ENCODE measurements at regions of chr2 and their contacts with region 1.

Region 1: GRCh38 chr2:210445116-210445707 is 31.3 kb downstream of the LANCL1 start:
- DNase-seq: peak; percentile 39
- ATAC-seq: no peak
- H3K4me3 ChIP-seq: no peak overlapping the region
- H3K4me3 Mint-ChIP-seq: no peak overlapping the region
- H3K27ac ChIP-seq: no peak overlapping the region
- H3K27ac Mint-ChIP-seq: no peak overlapping the region
- H3K4me1 ChIP-seq: peaks cover 9 to 10% of the 10 kb centered on the region in 2 donors
- H3K4me1 Mint-ChIP-seq: peaks cover 10% of the 10 kb centered on the region
- H3K27me3 ChIP-seq: no peaks in the 10 kb centered on the region
- H3K27me3 Mint-ChIP-seq: no peaks in the 10 kb centered on the region
- CTCF ChIP-seq: peak; percentile 98

Region 2: GRCh38 chr2:210432633-210433032 is 12.6 kb before region 1 on chr2:
- CTCF ChIA-PET with region 1: interaction called, 12 read pairs
- POLR2A ChIA-PET with region 1: no interaction called
- intact Hi-C with region 1: no loop called
- DNase-seq: no peak
- ATAC-seq: no peak
- H3K4me3 ChIP-seq: no peak overlapping the region
- H3K4me3 Mint-ChIP-seq: no peak overlapping the region
- H3K27ac ChIP-seq: no peak overlapping the region
- H3K27ac Mint-ChIP-seq: no peak overlapping the region
- H3K4me1 ChIP-seq: no peaks in the 10 kb centered on the region
- H3K4me1 Mint-ChIP-seq: no peaks in the 10 kb centered on the region
- H3K27me3 ChIP-seq: no peaks in the 10 kb centered on the region
- H3K27me3 Mint-ChIP-seq: no peaks in the 10 kb centered on the region
- CTCF ChIP-seq: no peak

Region 3: DNA sequence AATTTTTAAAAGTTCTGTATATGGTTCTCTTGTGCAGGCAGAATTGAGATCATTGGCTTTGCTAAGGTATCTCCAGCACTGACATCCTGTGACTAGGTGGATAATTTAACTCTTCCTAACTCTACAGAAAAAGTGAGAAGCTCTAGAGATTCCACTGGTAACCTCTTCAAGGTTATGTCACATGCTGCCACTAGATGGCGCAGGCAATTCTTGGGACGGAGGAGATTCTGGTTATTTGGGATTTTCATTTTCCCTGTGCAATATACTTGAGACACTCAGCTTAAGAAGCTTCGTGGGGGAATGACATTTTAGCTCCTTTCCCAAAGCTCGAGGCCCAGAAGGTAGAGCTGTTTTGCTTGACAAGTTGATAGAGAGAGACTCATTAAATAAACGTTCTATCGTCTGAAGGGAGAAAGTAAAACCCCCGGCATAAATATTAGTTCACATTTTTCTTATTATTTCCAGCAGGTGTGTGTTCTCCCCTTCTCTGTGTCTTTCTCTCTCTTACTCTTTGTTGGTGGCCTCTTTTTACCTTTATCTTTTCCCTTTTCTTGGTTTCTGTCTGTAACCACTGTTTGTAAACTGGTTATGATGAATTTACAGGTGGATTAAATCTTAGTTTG is 57.9 kb after region 1 on chr2:
- CTCF ChIA-PET with region 1: interaction called, 10 read pairs
- POLR2A ChIA-PET with region 1: no interaction called
- intact Hi-C with region 1: no loop called
- DNase-seq: peak; percentile 49
- ATAC-seq: peak; percentile 45
- H3K4me3 ChIP-seq: peak overlapping the region in 1 of 5 experiments; percentile 15
- H3K4me3 Mint-ChIP-seq: peak overlapping the region; percentile 68
- H3K27ac ChIP-seq: no peak overlapping the region
- H3K27ac Mint-ChIP-seq: no peak overlapping the region
- H3K4me1 ChIP-seq: peaks cover 0 to 5% of the 10 kb centered on the region in 2 donors
- H3K4me1 Mint-ChIP-seq: peaks cover 4% of the 10 kb centered on the region
- H3K27me3 ChIP-seq: peaks cover 0 to 19% (median 4%) of the 10 kb centered on the region in 4 experiments
- H3K27me3 Mint-ChIP-seq: peaks cover 31% of the 10 kb centered on the region
- CTCF ChIP-seq: peak; percentile 99

Region 4: GRCh38 chr2:210577263-210578071 is 132.3 kb after region 1 on chr2:
- CTCF ChIA-PET with region 1: no interaction called
- POLR2A ChIA-PET with region 1: no interaction called
- intact Hi-C with region 1: loop called (anchors 5 kb)
- DNase-seq: peak; percentile 39
- ATAC-seq: no peak
- H3K4me3 ChIP-seq: no peak overlapping the region
- H3K4me3 Mint-ChIP-seq: no peak overlapping the region
- H3K27ac ChIP-seq: no peak overlapping the region
- H3K27ac Mint-ChIP-seq: no peak overlapping the region
- H3K4me1 ChIP-seq: no peaks in the 10 kb centered on the region
- H3K4me1 Mint-ChIP-seq: no peaks in the 10 kb centered on the region
- H3K27me3 ChIP-seq: no peaks in the 10 kb centered on the region
- H3K27me3 Mint-ChIP-seq: no peaks in the 10 kb centered on the region
- CTCF ChIP-seq: peak; percentile 80

Measured in B cell (primary cell).